ENCODE measurements at regions of chr19 and their contacts with region 1.

Region 1: GRCh38 chr19:17859533-17860330 is at the start of gene RPL18A:
- DNase-seq: peak; percentile 99
- ATAC-seq: peak; percentile 94
- H3K4me3 ChIP-seq: peak within 1 kb of the TSS; percentile 74 to 100 (median 96)
- H3K4me3 Mint-ChIP-seq: peak within 1 kb of the TSS; percentile 96
- H3K27ac ChIP-seq: peak within 1 kb of the TSS; percentile 69 to 76
- H3K27ac Mint-ChIP-seq: peak within 1 kb of the TSS; percentile 98
- H3K4me1 ChIP-seq: peaks cover 23 to 41% of the 10 kb centered on the region in 2 donors
- H3K4me1 Mint-ChIP-seq: peaks cover 45% of the 10 kb centered on the region
- H3K27me3 ChIP-seq: no peaks in the 10 kb centered on the region
- H3K27me3 Mint-ChIP-seq: no peaks in the 10 kb centered on the region
- CTCF ChIP-seq: peak; percentile 84
- total RNA-seq, gene RPL18A: 3,099 and 3,228 TPM in 2 replicates

Region 2: DNA sequence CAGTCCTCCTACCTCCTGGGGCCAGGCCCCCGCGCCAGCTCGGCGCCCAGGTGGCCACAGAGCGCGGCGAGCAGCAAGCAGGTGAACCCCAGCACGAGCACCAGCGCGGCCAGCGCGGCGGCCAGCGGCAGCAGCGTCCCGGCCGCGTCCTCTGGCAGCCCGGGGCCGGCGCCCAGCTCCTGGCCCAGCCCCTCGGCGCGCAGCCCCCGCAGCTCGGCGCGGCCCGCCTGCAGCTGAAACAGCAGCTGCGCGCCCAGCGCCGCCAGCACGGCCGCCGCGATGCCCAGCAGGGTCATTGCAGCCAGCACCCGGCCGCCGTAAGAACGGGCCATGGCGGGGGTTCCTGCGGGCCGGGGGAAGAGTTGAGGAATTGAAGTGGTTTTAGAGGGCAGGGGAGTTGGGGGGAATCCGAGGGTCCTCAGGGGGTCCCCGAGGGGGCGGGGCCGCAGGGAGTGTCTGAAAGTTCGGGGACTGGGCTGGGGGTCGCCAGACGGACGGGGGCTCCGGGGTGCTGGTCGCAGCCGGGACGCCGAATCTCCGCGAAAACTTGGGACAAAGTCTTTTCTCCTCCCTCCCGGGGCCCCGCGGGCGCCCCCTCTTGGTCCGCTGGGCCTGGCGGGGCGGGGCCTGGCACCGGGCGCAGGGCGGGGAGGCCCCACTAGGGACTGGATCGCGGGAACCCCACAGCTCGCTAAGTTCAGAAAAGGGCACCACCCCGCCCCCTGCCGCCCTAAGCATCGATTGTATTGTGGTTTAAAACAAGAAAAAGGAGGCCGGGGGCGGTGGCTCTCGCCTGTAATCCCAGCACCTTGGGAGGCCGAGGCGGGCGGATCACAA is 411.4 kb before region 1 on chr19 and contains the start of gene TMEM221:
- CTCF ChIA-PET with region 1: no interaction called
- POLR2A ChIA-PET with region 1: no interaction called
- intact Hi-C with region 1: loop called (anchors 10 kb)
- DNase-seq: peak; percentile 73
- ATAC-seq: peak; percentile 86
- H3K4me3 ChIP-seq: peak within 1 kb of the TSS in 3 of 5 experiments; percentile 3 to 29 (median 15)
- H3K4me3 Mint-ChIP-seq: peak within 1 kb of the TSS; percentile 48
- H3K27ac ChIP-seq: no peak within 1 kb of the TSS
- H3K27ac Mint-ChIP-seq: no peak within 1 kb of the TSS
- H3K4me1 ChIP-seq: peaks cover 6 to 12% of the 10 kb centered on the region in 2 donors
- H3K4me1 Mint-ChIP-seq: peaks cover 13% of the 10 kb centered on the region
- H3K27me3 ChIP-seq: peaks cover 0 to 53% (median 15%) of the 10 kb centered on the region in 4 experiments
- H3K27me3 Mint-ChIP-seq: peaks cover 28% of the 10 kb centered on the region
- CTCF ChIP-seq: peak; percentile 68
- total RNA-seq, gene TMEM221: not detected in 2 replicates

Region 3: GRCh38 chr19:17570791-17571190 is 288.9 kb before region 1 on chr19:
- CTCF ChIA-PET with region 1: interaction called, 14 read pairs
- POLR2A ChIA-PET with region 1: interaction called, 5 read pairs
- intact Hi-C with region 1: no loop called
- DNase-seq: no peak
- ATAC-seq: no peak
- H3K4me3 ChIP-seq: no peak overlapping the region
- H3K4me3 Mint-ChIP-seq: no peak overlapping the region
- H3K27ac ChIP-seq: no peak overlapping the region
- H3K27ac Mint-ChIP-seq: no peak overlapping the region
- H3K4me1 ChIP-seq: no peaks in the 10 kb centered on the region
- H3K4me1 Mint-ChIP-seq: peaks cover 3% of the 10 kb centered on the region
- H3K27me3 ChIP-seq: no peaks in the 10 kb centered on the region
- H3K27me3 Mint-ChIP-seq: no peaks in the 10 kb centered on the region
- CTCF ChIP-seq: no peak

Region 4: GRCh38 chr19:17654993-17655392 is 204.7 kb before region 1 on chr19:
- CTCF ChIA-PET with region 1: no interaction called
- POLR2A ChIA-PET with region 1: no interaction called
- intact Hi-C with region 1: no loop called
- DNase-seq: no peak
- ATAC-seq: no peak
- H3K4me3 ChIP-seq: no peak overlapping the region
- H3K4me3 Mint-ChIP-seq: no peak overlapping the region
- H3K27ac ChIP-seq: no peak overlapping the region
- H3K27ac Mint-ChIP-seq: no peak overlapping the region
- H3K4me1 ChIP-seq: no peaks in the 10 kb centered on the region
- H3K4me1 Mint-ChIP-seq: no peaks in the 10 kb centered on the region
- H3K27me3 ChIP-seq: peaks cover 0 to 14% (median 0%) of the 10 kb centered on the region in 4 experiments
- H3K27me3 Mint-ChIP-seq: peaks cover 18% of the 10 kb centered on the region
- CTCF ChIP-seq: no peak

Region 5: DNA sequence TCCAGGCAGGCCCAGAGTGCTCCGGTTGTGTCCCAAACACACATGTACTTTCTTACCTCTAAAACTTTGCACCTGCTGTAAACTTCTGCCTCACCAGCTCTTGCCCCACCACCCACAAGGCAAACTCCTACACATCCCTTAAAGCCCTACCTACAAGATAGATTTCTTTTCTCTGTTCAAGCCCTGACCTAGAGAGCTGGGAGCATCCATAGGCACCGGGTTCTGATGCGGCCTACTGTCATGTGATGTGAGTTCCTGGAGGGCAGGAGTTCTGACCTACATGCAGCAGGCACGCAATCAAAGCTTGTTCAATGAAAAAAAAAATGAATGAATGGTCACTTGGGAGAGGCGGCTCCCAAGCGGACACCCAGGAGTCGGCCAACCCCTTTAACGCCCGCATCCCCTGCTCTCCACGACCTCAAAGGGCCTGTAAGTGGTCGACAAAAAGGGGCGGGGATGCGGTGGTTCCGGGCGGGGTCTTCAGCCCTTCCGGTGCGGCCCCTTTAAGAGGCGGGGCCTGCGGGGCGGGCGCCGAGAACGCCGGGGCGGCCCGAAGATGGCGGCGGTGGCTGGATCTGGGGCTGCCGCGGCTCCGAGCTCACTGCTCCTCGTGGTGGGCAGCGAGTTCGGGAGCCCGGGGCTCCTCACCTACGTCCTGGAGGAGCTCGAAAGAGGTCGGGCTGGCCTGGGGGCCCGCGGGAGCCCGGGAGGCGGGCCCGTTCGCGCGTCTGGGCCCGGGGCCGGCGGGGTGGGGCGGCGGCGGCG is 140.6 kb before region 1 on chr19 and contains the start of gene MAP1S:
- CTCF ChIA-PET with region 1: interaction called, 11 read pairs
- POLR2A ChIA-PET with region 1: interaction called, 3 read pairs
- intact Hi-C with region 1: no loop called
- DNase-seq: peak; percentile 72
- ATAC-seq: peak; percentile 93
- H3K4me3 ChIP-seq: peak within 1 kb of the TSS; percentile 78 to 94 (median 88)
- H3K4me3 Mint-ChIP-seq: peak within 1 kb of the TSS; percentile 92
- H3K27ac ChIP-seq: peak within 1 kb of the TSS; percentile 27 to 73
- H3K27ac Mint-ChIP-seq: peak within 1 kb of the TSS; percentile 82
- H3K4me1 ChIP-seq: peaks cover 32 to 39% of the 10 kb centered on the region in 2 donors
- H3K4me1 Mint-ChIP-seq: peaks cover 36% of the 10 kb centered on the region
- H3K27me3 ChIP-seq: no peaks in the 10 kb centered on the region
- H3K27me3 Mint-ChIP-seq: no peaks in the 10 kb centered on the region
- CTCF ChIP-seq: no peak
- total RNA-seq, gene MAP1S: 81.6 and 83.0 TPM in 2 replicates

Region 6: GRCh38 chr19:17766543-17767131 is 93.1 kb before region 1 on chr19:
- CTCF ChIA-PET with region 1: interaction called, 34 read pairs
- POLR2A ChIA-PET with region 1: interaction called, 4 read pairs
- intact Hi-C with region 1: no loop called
- DNase-seq: peak; percentile 74
- ATAC-seq: peak; percentile 62
- H3K4me3 ChIP-seq: no peak overlapping the region
- H3K4me3 Mint-ChIP-seq: peak overlapping the region; percentile 29
- H3K27ac ChIP-seq: no peak overlapping the region
- H3K27ac Mint-ChIP-seq: peak overlapping the region; percentile 72
- H3K4me1 ChIP-seq: peaks cover 4 to 12% of the 10 kb centered on the region in 2 donors
- H3K4me1 Mint-ChIP-seq: peaks cover 20% of the 10 kb centered on the region
- H3K27me3 ChIP-seq: no peaks in the 10 kb centered on the region
- H3K27me3 Mint-ChIP-seq: no peaks in the 10 kb centered on the region
- CTCF ChIP-seq: peak; percentile 78

Region 7: DNA sequence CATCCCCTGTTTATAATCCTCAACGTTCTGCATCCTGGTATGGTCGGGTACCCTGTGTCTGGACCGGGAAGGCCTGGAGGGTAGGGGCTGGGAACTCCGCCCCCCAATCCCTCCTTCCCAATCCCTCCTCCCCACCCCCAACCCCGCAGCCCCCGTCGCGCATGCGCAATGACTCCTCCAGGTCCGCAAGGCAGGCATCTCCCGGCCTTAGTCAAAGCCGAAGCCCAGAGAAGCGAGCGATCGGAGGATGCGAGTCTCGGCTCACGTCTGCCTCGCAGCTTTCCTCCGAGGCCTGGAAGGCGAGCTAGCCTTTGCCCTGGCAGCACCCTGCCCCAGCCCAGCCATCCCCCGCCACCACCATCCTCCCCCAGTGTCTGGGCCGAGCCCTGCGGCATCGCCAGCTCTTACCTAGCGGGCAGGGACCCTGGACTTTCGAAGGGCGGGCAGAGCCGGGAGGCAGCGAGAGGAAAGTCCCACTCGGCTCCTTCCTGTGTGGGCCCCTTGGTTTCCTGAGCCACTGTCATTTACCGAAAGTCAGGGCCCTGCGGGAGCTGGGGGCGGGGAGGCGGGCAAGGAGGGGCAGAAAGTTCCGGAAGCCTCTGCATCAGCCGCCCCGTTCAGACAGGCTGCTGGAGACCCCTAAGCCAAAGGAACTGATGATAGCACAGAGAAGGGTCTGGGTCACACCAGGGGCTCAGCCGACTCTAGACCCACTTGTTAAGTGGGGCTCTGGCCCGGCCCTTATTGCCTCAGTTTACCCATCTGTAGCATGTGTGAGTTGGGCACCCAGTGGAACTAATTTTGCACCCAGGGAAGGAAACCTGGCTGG is 12.0 kb before region 1 on chr19 and contains the start of gene JAK3:
- CTCF ChIA-PET with region 1: interaction called, 50 read pairs
- POLR2A ChIA-PET with region 1: interaction called, 15 read pairs
- intact Hi-C with region 1: no loop called
- DNase-seq: peak; percentile 88
- ATAC-seq: peak; percentile 81
- H3K4me3 ChIP-seq: peak within 1 kb of the TSS; percentile 57 to 85 (median 67)
- H3K4me3 Mint-ChIP-seq: peak within 1 kb of the TSS; percentile 96
- H3K27ac ChIP-seq: peak within 1 kb of the TSS; percentile 87 to 94
- H3K27ac Mint-ChIP-seq: peak within 1 kb of the TSS; percentile 91
- H3K4me1 ChIP-seq: peaks cover 58 to 90% of the 10 kb centered on the region in 2 donors
- H3K4me1 Mint-ChIP-seq: peaks cover 61% of the 10 kb centered on the region
- H3K27me3 ChIP-seq: no peaks in the 10 kb centered on the region
- H3K27me3 Mint-ChIP-seq: no peaks in the 10 kb centered on the region
- CTCF ChIP-seq: no peak
- total RNA-seq, gene JAK3: 142 and 143 TPM in 2 replicates

Region 8: DNA sequence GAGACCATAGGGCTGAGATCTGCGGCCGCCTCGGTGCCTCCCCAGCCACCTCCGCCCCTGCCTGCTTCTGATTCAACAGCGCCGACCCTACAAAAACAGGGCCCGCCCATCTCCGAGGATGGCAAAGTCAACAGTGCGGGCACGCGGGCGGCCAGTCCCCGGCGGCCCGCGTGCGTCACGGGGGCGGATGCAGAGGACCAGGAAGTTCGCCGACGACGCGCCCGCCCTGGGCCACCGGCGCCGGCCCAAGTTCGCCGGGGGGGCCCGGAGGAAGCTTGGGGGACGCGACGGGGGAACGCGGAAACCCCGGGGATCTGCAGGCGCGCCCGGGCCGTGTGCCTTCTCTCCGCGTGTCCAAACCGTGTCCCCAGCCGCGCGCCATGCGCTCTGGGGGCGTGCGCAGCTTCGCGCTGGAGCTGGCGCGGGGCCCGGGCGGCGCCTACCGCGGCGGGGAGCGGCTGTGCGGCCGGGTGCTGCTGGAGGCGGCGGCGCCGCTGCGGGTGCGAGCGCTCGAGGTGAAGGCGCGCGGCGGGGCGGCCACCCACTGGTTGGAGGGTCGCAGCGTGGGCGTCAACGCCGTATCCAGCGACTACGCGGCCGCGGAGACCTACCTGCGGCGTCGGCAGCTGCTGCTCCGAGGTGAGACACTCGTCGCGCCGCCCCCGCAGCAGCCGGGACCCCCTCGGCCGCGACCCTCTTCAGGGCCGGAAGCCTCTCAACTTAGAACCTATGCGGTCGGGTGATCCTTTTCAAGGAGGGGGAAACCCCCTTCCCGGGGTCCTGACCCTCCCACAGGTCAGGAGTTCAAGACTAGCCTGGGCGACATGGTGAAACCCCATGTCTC is 141.4 kb after region 1 on chr19:
- CTCF ChIA-PET with region 1: interaction called, 43 read pairs
- POLR2A ChIA-PET with region 1: interaction called, 8 read pairs
- intact Hi-C with region 1: loop called (anchors 1 kb)
- DNase-seq: peak; percentile 99
- ATAC-seq: peak; percentile 86
- H3K4me3 ChIP-seq: peak overlapping the region; percentile 66 to 94 (median 89)
- H3K4me3 Mint-ChIP-seq: peak overlapping the region; percentile 95
- H3K27ac ChIP-seq: peak overlapping the region; percentile 97 to 99
- H3K27ac Mint-ChIP-seq: peak overlapping the region; percentile 98
- H3K4me1 ChIP-seq: peaks cover 22 to 39% of the 10 kb centered on the region in 2 donors
- H3K4me1 Mint-ChIP-seq: peaks cover 32% of the 10 kb centered on the region
- H3K27me3 ChIP-seq: no peaks in the 10 kb centered on the region
- H3K27me3 Mint-ChIP-seq: no peaks in the 10 kb centered on the region
- CTCF ChIP-seq: no peak